Tibial artery (tissue), 4 donors: ENCODE measurements at regions of chr11 and their contacts with region 1.

Region 1: DNA sequence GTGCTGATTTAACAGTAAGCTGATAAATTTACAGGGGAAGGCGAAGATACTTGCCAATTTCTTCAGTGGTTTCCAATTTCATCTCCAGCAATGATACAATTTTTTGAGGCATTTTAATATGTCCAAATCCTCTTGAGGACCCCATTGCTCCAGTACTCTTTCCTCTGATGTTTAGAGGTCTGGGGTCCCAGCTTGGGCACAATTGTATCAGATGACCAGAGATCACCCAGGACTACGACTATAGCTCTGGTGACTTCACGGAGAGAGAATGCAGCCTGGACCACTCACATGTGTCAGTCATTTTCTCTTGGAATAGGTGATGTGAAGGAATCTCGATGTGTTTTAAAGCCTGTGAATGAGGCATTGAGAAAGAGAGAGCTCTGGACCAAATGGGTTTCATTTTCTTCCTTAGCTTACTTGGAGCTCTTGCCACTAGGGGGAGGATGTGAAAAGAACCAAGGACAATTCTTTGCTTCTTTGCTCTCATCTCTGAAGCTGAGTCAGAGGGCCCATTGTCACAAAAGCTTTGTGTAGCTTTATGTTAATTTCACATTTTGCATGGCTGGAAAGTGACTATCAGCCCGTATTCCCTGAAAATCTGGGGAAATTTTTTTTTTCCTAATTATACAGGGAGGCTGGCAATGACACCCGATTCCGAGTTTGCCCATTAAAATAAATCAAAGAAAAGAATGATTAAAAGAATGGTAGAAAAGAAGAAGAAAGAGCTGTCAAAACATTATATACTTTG is 6.7 kb upstream of the CCDC90B start:
- DNase-seq: no peak
- H3K4me3 ChIP-seq: no peak overlapping the region
- H3K27ac ChIP-seq: no peak overlapping the region
- H3K4me1 ChIP-seq: no peaks in the 10 kb centered on the region
- H3K27me3 ChIP-seq: no peaks in the 10 kb centered on the region
- CTCF ChIP-seq: peak; percentile 57 to 63

Region 2: GRCh38 chr11:83071567-83072349 is 221.1 kb before region 1 on chr11 and contains the start of gene RAB30:
- intact Hi-C with region 1: no loop called
- DNase-seq: peak; percentile 99
- H3K4me3 ChIP-seq: peak within 1 kb of the TSS; percentile 77 to 81
- H3K27ac ChIP-seq: peak within 1 kb of the TSS; percentile 92 to 93
- H3K4me1 ChIP-seq: peaks cover 0 to 44% (median 29%) of the 10 kb centered on the region in 4 donors
- H3K27me3 ChIP-seq: no peaks in the 10 kb centered on the region
- CTCF ChIP-seq: no peak

Region 3: GRCh38 chr11:83364500-83365059 is 71.7 kb after region 1 on chr11:
- intact Hi-C with region 1: no loop called
- DNase-seq: no peak
- H3K4me3 ChIP-seq: no peak overlapping the region
- H3K27ac ChIP-seq: no peak overlapping the region
- H3K4me1 ChIP-seq: no peaks in the 10 kb centered on the region
- H3K27me3 ChIP-seq: no peaks in the 10 kb centered on the region
- CTCF ChIP-seq: no peak

Region 4: DNA sequence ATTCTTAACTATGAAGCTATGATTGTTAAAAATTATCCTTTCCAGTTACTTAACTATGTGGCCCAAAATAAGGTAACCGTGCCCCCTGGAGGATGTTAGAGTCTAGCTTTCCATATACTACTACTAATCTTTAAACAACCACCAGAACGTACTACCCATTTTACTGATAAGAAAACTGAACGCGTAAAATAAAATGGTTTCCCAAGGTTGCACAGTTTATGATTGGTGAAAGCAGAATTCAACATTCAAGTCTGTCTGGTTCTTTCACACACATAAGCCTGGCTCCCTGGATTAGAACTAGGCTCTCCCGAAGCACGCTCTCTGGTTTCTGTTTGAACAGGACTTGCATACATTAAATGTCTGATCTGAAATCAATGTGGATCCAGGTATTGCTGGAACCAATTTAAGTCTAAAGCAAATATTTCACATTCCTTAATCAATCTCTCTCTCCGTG is 431.2 kb after region 1 on chr11:
- intact Hi-C with region 1: loop called (anchors 10 kb)
- DNase-seq: peak in 1 of 2 donors; percentile 36
- H3K4me3 ChIP-seq: peak overlapping the region; percentile 39 to 47
- H3K27ac ChIP-seq: no peak overlapping the region
- H3K4me1 ChIP-seq: peaks cover 0 to 19% (median 12%) of the 10 kb centered on the region in 4 donors
- H3K27me3 ChIP-seq: no peaks in the 10 kb centered on the region
- CTCF ChIP-seq: peak; percentile 24 to 44

Region 5: DNA sequence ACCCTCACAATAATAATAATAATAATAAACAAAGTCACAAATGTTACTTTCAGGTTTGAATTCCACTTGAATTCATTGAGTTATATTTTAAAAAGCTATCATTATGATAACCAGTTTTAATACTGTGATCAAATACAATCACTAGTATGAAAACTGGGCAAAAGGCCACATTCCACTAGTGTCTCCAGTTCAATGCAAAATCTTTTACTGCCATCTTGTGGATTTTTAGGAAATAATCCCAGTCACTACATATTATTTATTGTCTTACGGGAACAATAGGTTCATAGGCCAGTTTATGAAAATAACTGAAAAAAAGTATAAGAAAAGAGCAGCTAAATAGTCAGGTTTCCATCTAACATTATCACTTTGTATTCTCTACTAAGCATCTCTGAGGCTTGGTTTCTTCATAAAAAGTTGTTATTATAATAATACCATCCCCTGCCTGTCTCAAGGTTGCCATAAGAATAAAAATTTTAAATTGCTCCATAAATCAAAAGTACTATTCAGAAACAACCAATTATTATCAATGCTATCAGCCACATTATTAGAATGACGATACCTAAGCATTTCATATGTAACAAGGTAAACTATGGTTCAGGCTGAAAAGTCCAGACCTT is 527.2 kb after region 1 on chr11:
- intact Hi-C with region 1: loop called (anchors 10 kb)
- DNase-seq: no peak
- H3K4me3 ChIP-seq: no peak overlapping the region
- H3K27ac ChIP-seq: no peak overlapping the region
- H3K4me1 ChIP-seq: no peaks in the 10 kb centered on the region
- H3K27me3 ChIP-seq: no peaks in the 10 kb centered on the region
- CTCF ChIP-seq: peak; percentile 53 to 61